ENCODE measurements at regions of chr11 and their contacts with region 1.

Region 1: GRCh38 chr11:396948-397548 is 3.0 kb downstream of the PKP3 start:
- DNase-seq: no peak
- ATAC-seq: no peak
- H3K4me3 ChIP-seq: no peak overlapping the region
- H3K27ac ChIP-seq: peak overlapping the region in 1 of 2 experiments; percentile 98; a peak in 1 of 6 replicates
- H3K4me1 ChIP-seq: peaks cover 37% of the 10 kb centered on the region
- CTCF ChIP-seq: no peak
- EP300 ChIP-seq: no peak
- POLR2A ChIP-seq: no peak
- RAD21 ChIP-seq: no peak

Region 2: GRCh38 chr11:406978-407739 is 10.1 kb after region 1 on chr11:
- CTCF ChIA-PET with region 1: interaction called, 19 read pairs
- POLR2A ChIA-PET with region 1: interaction called, 18 read pairs
- DNase-seq: peak; percentile 63 to 90
- ATAC-seq: peak; percentile 52 to 81
- H3K4me3 ChIP-seq: peak overlapping the region; percentile 56
- H3K27ac ChIP-seq: peak overlapping the region; percentile 84 to 93
- H3K4me1 ChIP-seq: peaks cover 29% of the 10 kb centered on the region
- CTCF ChIP-seq: no peak
- EP300 ChIP-seq: no peak
- POLR2A ChIP-seq: peak; percentile 18; the same call in 1 of the 2 replicates
- RAD21 ChIP-seq: peak in 1 of 2 experiments; percentile 25; a peak in 2 of 5 replicates